Dendritic cell treated with granulocyte-macrophage colony-stimulating factor and Interleukin-4, amounts not matched to agents 40 ng/mL and 50 ng/mL, for 4 days (primary cell): ENCODE measurements at regions of chr19 and their contacts with region 1.

Region 1: GRCh38 chr19:51926784-51927742 is at the start of gene ZNF613:
- H3K4me3 Mint-ChIP-seq: peak within 1 kb of the TSS; percentile 95
- H3K27ac Mint-ChIP-seq: peak within 1 kb of the TSS; percentile 94
- H3K4me1 Mint-ChIP-seq: peaks cover 21% of the 10 kb centered on the region
- H3K27me3 Mint-ChIP-seq: no peaks in the 10 kb centered on the region

Region 2: GRCh38 chr19:51887522-51888498 is 39.3 kb before region 1 on chr19 and contains the start of gene ZNF577:
- intact Hi-C with region 1: loop called (anchors 5 kb)
- H3K4me3 Mint-ChIP-seq: peak within 1 kb of the TSS; percentile 95
- H3K27ac Mint-ChIP-seq: peak within 1 kb of the TSS; percentile 98
- H3K4me1 Mint-ChIP-seq: peaks cover 5% of the 10 kb centered on the region
- H3K27me3 Mint-ChIP-seq: no peaks in the 10 kb centered on the region

Region 3: GRCh38 chr19:51904331-51905165 is 22.5 kb before region 1 on chr19 and contains the start of gene ZNF649:
- intact Hi-C with region 1: loop called (anchors 1 kb)
- H3K4me3 Mint-ChIP-seq: peak within 1 kb of the TSS; percentile 95
- H3K27ac Mint-ChIP-seq: peak within 1 kb of the TSS; percentile 96
- H3K4me1 Mint-ChIP-seq: peaks cover 24% of the 10 kb centered on the region
- H3K27me3 Mint-ChIP-seq: peaks cover 27% of the 10 kb centered on the region